CD4-positive, alpha-beta T cell (primary cell): ENCODE measurements at regions of chr17 and their contacts with region 1.

Region 1: GRCh38 chr17:77391668-77392375 is 251.1 kb downstream of the SEC14L1 start:
- DNase-seq: peak in 10 of 14 experiments; percentile 33 to 76 (median 53)
- ATAC-seq: peak; percentile 41
- H3K4me3 ChIP-seq: peak overlapping the region; percentile 19
- H3K4me3 Mint-ChIP-seq: peak overlapping the region; percentile 65
- H3K27ac ChIP-seq: peak overlapping the region; percentile 31
- H3K27ac Mint-ChIP-seq: peak overlapping the region; percentile 90
- H3K4me1 ChIP-seq: peaks cover 91% of the 10 kb centered on the region
- H3K4me1 Mint-ChIP-seq: peaks cover 88% of the 10 kb centered on the region
- H3K27me3 ChIP-seq: no peaks in the 10 kb centered on the region
- H3K27me3 Mint-ChIP-seq: no peaks in the 10 kb centered on the region
- CTCF ChIP-seq: no peak

Region 2: DNA sequence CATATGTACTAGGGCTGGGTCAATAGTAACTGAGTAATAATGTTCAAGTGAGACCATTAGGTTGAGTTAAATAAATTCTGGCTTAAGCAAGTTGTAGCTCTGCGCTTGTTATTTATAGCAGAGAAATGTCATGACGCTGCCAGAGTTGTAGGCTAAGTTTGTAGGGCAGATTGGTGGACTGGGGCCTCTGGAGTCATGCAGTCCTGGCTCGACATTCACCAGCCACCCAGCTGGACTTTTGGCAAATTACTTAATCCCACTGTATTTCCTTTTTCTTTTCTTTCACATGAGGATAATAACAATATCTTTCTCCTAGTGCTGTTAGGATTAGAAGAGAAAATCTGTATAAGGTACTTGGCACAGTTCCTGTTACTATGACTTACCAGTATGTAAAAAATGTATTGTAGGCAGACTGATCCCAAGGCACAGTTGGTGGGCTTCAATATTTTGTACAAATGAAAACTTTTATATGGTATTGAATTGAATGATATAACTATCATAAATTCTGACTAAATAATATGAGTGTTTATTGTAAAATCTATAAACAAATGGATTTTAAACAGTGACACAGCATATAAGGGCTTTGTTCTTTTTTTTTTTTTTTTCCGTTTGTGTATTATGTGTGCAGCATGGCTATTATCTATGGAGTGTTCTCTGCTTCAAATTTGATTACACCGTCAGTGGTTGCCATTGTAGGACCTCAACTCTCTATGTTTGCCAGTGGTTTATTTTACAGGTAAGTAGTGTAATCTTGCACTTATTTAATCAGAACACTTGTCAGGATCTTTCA is 651.3 kb before region 1 on chr17:
- CTCF ChIA-PET with region 1: no interaction called
- POLR2A ChIA-PET with region 1: no interaction called
- intact Hi-C with region 1: no loop called
- DNase-seq: no peak
- ATAC-seq: no peak
- H3K4me3 ChIP-seq: no peak overlapping the region
- H3K4me3 Mint-ChIP-seq: peak overlapping the region; percentile 45
- H3K27ac ChIP-seq: no peak overlapping the region
- H3K27ac Mint-ChIP-seq: no peak overlapping the region
- H3K4me1 ChIP-seq: peaks cover 13% of the 10 kb centered on the region
- H3K4me1 Mint-ChIP-seq: peaks cover 28% of the 10 kb centered on the region
- H3K27me3 ChIP-seq: no peaks in the 10 kb centered on the region
- H3K27me3 Mint-ChIP-seq: no peaks in the 10 kb centered on the region
- CTCF ChIP-seq: no peak

Region 3: GRCh38 chr17:77343031-77343800 is 48.6 kb before region 1 on chr17:
- CTCF ChIA-PET with region 1: interaction called, 5 read pairs
- POLR2A ChIA-PET with region 1: interaction called, 3 read pairs
- intact Hi-C with region 1: loop called in 1 of 2 experiments (anchors 5 kb)
- DNase-seq: peak in 2 of 14 experiments; percentile 22 to 35
- ATAC-seq: no peak
- H3K4me3 ChIP-seq: no peak overlapping the region
- H3K4me3 Mint-ChIP-seq: peak overlapping the region; percentile 23
- H3K27ac ChIP-seq: peak overlapping the region; percentile 47 to 64
- H3K27ac Mint-ChIP-seq: peak overlapping the region; percentile 78
- H3K4me1 ChIP-seq: peaks cover 69% of the 10 kb centered on the region
- H3K4me1 Mint-ChIP-seq: peaks cover 53% of the 10 kb centered on the region
- H3K27me3 ChIP-seq: no peaks in the 10 kb centered on the region
- H3K27me3 Mint-ChIP-seq: no peaks in the 10 kb centered on the region
- CTCF ChIP-seq: no peak

Region 4: DNA sequence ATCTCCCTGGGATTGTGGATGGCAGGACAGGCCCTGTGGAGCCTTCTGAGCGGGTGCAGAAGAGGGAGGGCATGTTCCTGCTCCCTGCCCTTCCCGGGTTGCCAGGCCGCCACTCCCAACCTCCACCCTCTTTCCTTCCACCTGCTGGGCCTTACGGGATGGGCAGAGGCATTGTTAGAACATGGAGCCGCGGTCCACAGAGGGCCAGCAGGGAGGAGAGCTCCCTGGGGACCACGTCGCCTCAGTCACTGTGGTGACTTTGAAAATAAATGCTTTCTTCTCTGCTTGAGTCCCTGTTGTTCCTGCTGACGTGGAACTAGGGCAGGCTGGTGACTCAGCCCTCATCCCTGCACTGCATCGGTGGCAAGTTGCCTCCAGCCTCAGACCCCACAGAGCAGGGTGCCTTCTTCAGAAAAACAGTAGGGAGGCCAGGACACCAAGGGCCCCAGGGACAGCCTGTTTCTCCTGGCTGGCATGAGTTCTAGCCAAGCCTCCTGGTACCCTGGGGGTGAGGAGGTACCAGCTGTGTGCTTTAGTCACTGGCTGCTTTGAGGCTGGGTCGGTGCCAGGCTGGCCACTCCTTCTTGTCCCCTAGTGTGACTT is 26.1 kb before region 1 on chr17:
- CTCF ChIA-PET with region 1: no interaction called
- POLR2A ChIA-PET with region 1: no interaction called
- intact Hi-C with region 1: no loop called
- DNase-seq: peak in 6 of 14 experiments; percentile 19 to 68 (median 44)
- ATAC-seq: peak; percentile 58
- H3K4me3 ChIP-seq: no peak overlapping the region
- H3K4me3 Mint-ChIP-seq: peak overlapping the region; percentile 30
- H3K27ac ChIP-seq: no peak overlapping the region
- H3K27ac Mint-ChIP-seq: no peak overlapping the region
- H3K4me1 ChIP-seq: peaks cover 72% of the 10 kb centered on the region
- H3K4me1 Mint-ChIP-seq: peaks cover 68% of the 10 kb centered on the region
- H3K27me3 ChIP-seq: no peaks in the 10 kb centered on the region
- H3K27me3 Mint-ChIP-seq: no peaks in the 10 kb centered on the region
- CTCF ChIP-seq: no peak

Region 5: GRCh38 chr17:77420804-77421629 is 29.2 kb after region 1 on chr17:
- CTCF ChIA-PET with region 1: interaction called, 3 read pairs
- POLR2A ChIA-PET with region 1: interaction called, 368 read pairs
- intact Hi-C with region 1: no loop called
- DNase-seq: peak; percentile 44 to 82 (median 66)
- ATAC-seq: peak; percentile 69
- H3K4me3 ChIP-seq: peak overlapping the region; percentile 31
- H3K4me3 Mint-ChIP-seq: peak overlapping the region; percentile 83
- H3K27ac ChIP-seq: peak overlapping the region; percentile 61 to 76
- H3K27ac Mint-ChIP-seq: peak overlapping the region; percentile 89
- H3K4me1 ChIP-seq: peaks cover 92% of the 10 kb centered on the region
- H3K4me1 Mint-ChIP-seq: peaks cover 65% of the 10 kb centered on the region
- H3K27me3 ChIP-seq: no peaks in the 10 kb centered on the region
- H3K27me3 Mint-ChIP-seq: no peaks in the 10 kb centered on the region
- CTCF ChIP-seq: no peak